ENCODE measurements at regions of chr12 and their contacts with region 1.

Region 1: GRCh38 chr12:121223292-121224285 is 13.7 kb downstream of the P2RX4 start:
- DNase-seq: peak; percentile 71
- ATAC-seq: peak; percentile 68
- H3K4me3 Mint-ChIP-seq: peak overlapping the region; percentile 69
- H3K27ac Mint-ChIP-seq: peak overlapping the region; percentile 95
- H3K4me1 Mint-ChIP-seq: peaks cover 38% of the 10 kb centered on the region
- H3K27me3 Mint-ChIP-seq: no peaks in the 10 kb centered on the region

Region 2: DNA sequence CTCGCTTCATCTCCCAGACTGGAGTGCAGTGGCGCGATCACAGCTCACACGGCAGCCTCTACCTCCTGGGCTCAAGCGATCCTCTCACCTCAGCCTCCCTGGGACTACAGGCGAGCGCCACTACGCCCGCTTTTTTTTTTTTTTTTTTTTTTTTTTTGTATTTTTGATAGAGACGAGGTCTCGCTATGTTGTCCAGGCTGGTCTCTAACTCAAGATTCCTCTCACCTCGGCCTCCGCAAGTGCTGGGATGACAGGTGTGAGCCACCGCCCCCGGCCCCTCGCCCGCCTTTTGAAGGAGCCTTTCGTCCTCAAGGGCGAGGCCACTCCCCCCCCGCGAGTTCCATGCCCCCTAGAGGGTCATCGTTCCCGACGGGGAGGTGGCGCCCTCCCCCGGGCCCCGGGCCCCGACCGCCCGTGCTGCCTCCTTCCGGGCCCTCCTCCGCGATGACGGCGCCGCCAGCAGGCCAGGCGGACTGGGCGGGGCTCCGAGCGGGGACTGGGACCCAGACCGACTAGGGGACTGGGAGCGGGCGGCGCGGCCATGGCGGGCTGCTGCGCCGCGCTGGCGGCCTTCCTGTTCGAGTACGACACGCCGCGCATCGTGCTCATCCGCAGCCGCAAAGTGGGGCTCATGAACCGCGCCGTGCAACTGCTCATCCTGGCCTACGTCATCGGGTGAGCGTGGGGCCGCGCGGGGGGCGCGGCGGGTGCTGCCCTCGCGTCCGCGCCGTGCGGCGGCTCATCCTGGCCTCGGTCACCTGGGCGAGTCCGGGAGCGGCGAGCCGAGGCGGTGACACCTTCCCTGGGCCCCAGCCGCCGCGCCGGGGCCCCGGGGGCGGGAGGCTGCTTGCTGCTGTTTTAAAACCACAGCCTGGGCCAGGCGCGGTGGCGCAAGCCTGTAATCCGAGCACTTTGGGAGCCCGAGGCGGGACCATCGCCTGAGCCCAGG is 13.7 kb before region 1 on chr12 and contains the start of gene P2RX4:
- POLR2A ChIA-PET with region 1: interaction called, 13 read pairs
- DNase-seq: peak; percentile 92
- ATAC-seq: peak; percentile 89
- H3K4me3 Mint-ChIP-seq: peak within 1 kb of the TSS; percentile 96
- H3K27ac Mint-ChIP-seq: peak within 1 kb of the TSS; percentile 96
- H3K4me1 Mint-ChIP-seq: peaks cover 22% of the 10 kb centered on the region
- H3K27me3 Mint-ChIP-seq: no peaks in the 10 kb centered on the region
- total RNA-seq, gene P2RX4: 50.7 to 52.9 TPM

Region 3: GRCh38 chr12:121240484-121241101 is 17.0 kb after region 1 on chr12:
- POLR2A ChIA-PET with region 1: interaction called, 28 read pairs
- DNase-seq: peak; percentile 86
- ATAC-seq: peak; percentile 87
- H3K4me3 Mint-ChIP-seq: peak overlapping the region; percentile 70
- H3K27ac Mint-ChIP-seq: peak overlapping the region; percentile 89
- H3K4me1 Mint-ChIP-seq: peaks cover 37% of the 10 kb centered on the region
- H3K27me3 Mint-ChIP-seq: no peaks in the 10 kb centered on the region

Region 4: GRCh38 chr12:121252712-121253345 is 29.2 kb after region 1 on chr12:
- POLR2A ChIA-PET with region 1: no interaction called
- DNase-seq: no peak
- ATAC-seq: no peak
- H3K4me3 Mint-ChIP-seq: no peak overlapping the region
- H3K27ac Mint-ChIP-seq: no peak overlapping the region
- H3K4me1 Mint-ChIP-seq: peaks cover 1% of the 10 kb centered on the region
- H3K27me3 Mint-ChIP-seq: no peaks in the 10 kb centered on the region

Measured in activated naive CD8-positive, alpha-beta T cell treated with anti-CD3 and anti-CD28 coated beads, Interleukin-2, amount 10 ng/mL, durations not matched to agents 7 days and 5 days (primary cell).